Heart right ventricle (tissue), 16 donors: ENCODE measurements at regions of chr17 and their contacts with region 1.

Region 1: GRCh38 chr17:33550261-33550660 is 257.2 kb upstream of the ASIC2 start:
- DNase-seq: no peak
- ATAC-seq: no peak
- H3K4me3 ChIP-seq: no peak overlapping the region
- H3K27ac ChIP-seq: no peak overlapping the region
- H3K4me1 ChIP-seq: no peaks in the 10 kb centered on the region
- H3K27me3 ChIP-seq: peaks cover 0 to 46% (median 20%) of the 10 kb centered on the region in 7 donors
- CTCF ChIP-seq: no peak

Region 2: DNA sequence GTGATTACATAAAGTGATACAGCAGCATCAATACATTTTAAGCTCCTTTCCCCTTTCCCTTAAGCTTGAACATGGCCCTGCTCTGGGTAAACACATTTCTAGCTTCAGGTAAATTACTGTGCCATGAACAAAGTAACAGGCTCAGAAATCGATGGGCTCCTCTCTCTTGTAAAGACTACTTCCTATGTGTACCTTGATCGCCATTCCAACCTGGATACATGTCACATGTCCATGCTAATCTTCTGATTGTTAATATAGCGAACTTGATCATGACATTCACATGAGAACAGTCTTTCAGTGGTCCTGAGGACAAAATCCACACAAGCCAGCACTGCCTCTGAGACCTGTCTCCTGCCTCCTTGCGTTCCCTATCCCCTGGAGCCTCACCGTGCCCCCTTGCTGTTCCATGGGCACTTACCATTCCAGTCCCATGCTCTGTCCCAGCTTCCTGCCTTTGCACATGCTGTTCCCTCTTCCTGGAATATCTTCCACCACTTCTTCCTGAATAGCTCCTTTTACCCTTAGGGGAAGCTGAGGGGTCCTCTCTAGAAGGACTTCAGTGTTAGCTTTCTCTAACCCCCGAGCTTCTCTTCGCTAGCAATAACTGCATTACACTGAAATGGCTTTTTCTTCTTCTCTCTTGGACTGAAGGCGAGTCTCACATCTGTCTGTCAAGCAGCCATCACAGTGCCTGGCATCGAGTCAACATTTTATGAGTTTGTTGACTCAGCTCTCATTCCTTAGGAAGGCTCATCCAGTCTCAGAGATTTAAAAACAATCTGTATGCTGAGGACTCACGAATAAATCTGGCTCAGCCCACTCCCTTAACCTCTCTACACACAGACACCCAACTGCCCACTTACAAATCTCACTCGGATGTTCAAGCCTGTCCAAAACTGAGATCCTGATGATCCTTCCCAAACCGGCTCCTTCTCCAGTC is 350.4 kb before region 1 on chr17:
- intact Hi-C with region 1: loop called in 1 of 10 experiments (anchors 10 kb)
- DNase-seq: no peak
- ATAC-seq: no peak
- H3K4me3 ChIP-seq: no peak overlapping the region
- H3K27ac ChIP-seq: no peak overlapping the region
- H3K4me1 ChIP-seq: no peaks in the 10 kb centered on the region
- H3K27me3 ChIP-seq: peaks cover 0 to 78% (median 20%) of the 10 kb centered on the region in 7 donors
- CTCF ChIP-seq: no peak

Region 3: GRCh38 chr17:33615861-33616260 is 65.6 kb after region 1 on chr17:
- intact Hi-C with region 1: no loop called
- DNase-seq: no peak
- ATAC-seq: no peak
- H3K4me3 ChIP-seq: no peak overlapping the region
- H3K27ac ChIP-seq: no peak overlapping the region
- H3K4me1 ChIP-seq: no peaks in the 10 kb centered on the region
- H3K27me3 ChIP-seq: peaks cover 0 to 33% (median 7%) of the 10 kb centered on the region in 7 donors
- CTCF ChIP-seq: no peak

Region 4: DNA sequence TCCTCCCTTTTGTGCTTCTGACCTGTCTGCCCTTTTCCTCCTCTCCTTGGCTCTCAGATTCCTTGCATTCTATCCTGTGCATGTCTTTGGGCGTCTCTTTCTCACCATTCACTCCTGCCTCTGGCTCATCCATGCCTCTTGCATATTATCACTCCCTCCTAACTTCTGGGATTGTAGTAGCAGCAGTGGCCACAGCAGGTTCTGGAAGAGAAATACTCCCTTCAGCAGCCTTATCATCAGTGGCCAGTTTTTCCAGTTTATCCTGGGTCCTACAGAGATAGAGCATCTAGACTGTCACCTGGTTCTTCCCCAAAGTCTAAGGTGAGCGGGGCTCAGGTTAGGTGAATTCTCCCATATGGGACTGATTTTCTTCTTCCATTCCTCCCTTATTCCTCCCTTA is 350.8 kb after region 1 on chr17:
- intact Hi-C with region 1: no loop called
- DNase-seq: no peak
- ATAC-seq: no peak
- H3K4me3 ChIP-seq: no peak overlapping the region
- H3K27ac ChIP-seq: no peak overlapping the region
- H3K4me1 ChIP-seq: no peaks in the 10 kb centered on the region
- H3K27me3 ChIP-seq: peaks cover 0 to 44% (median 12%) of the 10 kb centered on the region in 7 donors
- CTCF ChIP-seq: no peak